AG04450 (cell line): ENCODE measurements at regions of chr1 and their contacts with region 1.

Region 1: DNA sequence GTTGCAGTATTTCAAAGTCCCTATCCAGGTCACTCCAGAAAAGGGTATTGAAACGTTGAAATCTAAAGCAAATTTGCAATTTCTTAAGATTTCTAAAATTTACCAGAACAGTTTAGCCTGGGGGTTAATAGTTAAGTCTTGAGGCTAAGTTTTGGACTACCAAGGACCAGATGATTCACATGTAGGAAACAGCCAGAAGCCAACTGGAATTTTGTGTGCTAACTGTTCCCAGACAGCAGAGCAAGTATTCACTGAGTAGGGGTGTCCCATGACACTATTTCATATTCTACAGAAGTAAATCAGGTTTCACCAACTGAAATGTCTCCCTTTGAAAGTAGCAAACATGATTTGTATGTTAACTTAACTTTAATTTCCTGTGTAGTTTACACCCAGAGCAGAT is 11.5 kb upstream of the C1orf105 start:
- DNase-seq: no peak
- H3K4me3 ChIP-seq: no peak overlapping the region
- H3K27ac ChIP-seq: no peak overlapping the region
- H3K27me3 ChIP-seq: no peaks in the 10 kb centered on the region
- CTCF ChIP-seq: no peak

Region 2: GRCh38 chr1:171581226-171581625 is 827.7 kb before region 1 on chr1:
- CTCF ChIA-PET with region 1: interaction called, 11 read pairs
- POLR2A ChIA-PET with region 1: no interaction called
- DNase-seq: no peak
- H3K4me3 ChIP-seq: no peak overlapping the region
- H3K27ac ChIP-seq: no peak overlapping the region
- H3K27me3 ChIP-seq: no peaks in the 10 kb centered on the region
- CTCF ChIP-seq: no peak

Region 3: DNA sequence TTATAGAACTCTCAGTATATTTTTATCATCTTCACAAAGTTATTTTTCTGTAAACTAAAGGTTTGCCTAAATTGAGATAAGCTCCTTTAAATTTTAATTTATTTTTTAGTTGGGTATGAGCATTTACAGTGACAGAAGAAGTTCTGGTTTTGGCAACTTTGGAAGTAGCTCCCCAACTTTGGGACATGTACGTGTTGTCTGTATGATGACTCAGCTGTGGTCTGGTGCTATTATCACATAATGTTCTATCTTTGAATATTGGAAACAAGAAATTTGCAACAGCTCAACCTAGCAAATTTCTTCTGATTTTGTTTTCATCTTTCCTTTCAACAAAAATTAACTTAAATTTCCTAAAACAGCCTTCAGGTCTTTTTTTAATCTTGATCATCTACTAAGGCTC is 35.1 kb before region 1 on chr1:
- CTCF ChIA-PET with region 1: no interaction called
- POLR2A ChIA-PET with region 1: no interaction called
- DNase-seq: no peak
- H3K4me3 ChIP-seq: no peak overlapping the region
- H3K27ac ChIP-seq: no peak overlapping the region
- H3K27me3 ChIP-seq: no peaks in the 10 kb centered on the region
- CTCF ChIP-seq: no peak